Panc1 (cell line): ENCODE measurements at regions of chr15 and their contacts with region 1.

Region 1: GRCh38 chr15:31228985-31229826 is 97.4 kb upstream of the KLF13 start:
- DNase-seq: no peak
- ATAC-seq: peak; percentile 63; the same call in 1 of the 2 replicates
- H3K4me3 ChIP-seq: no peak overlapping the region
- H3K27ac ChIP-seq: no peak overlapping the region
- H3K4me1 ChIP-seq: peaks cover 2% of the 10 kb centered on the region
- H3K27me3 ChIP-seq: no peaks in the 10 kb centered on the region
- CTCF ChIP-seq: no peak

Region 2: DNA sequence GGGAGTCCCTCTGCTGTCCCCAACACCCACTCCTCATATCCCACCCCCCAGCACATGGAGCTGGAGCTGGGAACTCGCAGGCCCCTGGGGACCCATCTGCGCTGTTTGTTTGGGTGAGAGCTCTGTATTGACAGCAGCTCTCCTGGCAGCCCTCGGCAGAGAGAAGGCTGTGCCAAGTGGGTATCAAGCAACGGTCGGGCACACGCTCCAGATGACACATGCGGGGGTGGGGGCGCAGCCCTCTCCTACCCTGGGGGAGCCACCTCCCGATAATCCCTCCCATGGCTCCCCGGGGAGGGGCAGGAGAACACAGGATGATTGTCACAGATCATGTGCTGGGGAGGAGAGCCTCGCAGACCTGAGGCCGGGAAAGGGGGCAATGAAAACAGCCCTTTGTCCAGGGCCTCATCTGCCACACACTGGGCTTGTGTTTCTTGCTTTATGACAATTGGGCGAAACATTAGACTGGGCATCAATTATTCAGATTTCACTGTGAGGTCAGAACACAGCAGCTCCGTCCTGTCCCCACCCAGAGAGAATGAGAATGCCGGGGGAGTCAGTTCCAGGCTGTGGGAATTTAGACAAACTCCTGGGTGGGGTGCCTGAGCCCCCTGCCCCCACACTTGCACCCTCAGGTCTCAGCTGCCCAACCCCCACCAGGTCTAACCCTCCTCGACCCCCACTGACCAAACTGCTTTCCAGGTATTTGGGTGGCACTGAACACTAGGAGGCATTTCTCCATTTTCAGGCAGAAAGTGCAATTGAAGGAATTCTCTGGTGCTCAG is 51.0 kb after region 1 on chr15:
- CTCF ChIA-PET with region 1: no interaction called
- POLR2A ChIA-PET with region 1: no interaction called
- in situ Hi-C with region 1: no loop called
- intact Hi-C with region 1: loop called (anchors 10 kb)
- DNase-seq: no peak
- ATAC-seq: peak; percentile 61
- H3K4me3 ChIP-seq: no peak overlapping the region
- H3K27ac ChIP-seq: peak overlapping the region; percentile 66
- H3K4me1 ChIP-seq: peaks cover 13% of the 10 kb centered on the region
- H3K27me3 ChIP-seq: no peaks in the 10 kb centered on the region
- CTCF ChIP-seq: no peak

Region 3: DNA sequence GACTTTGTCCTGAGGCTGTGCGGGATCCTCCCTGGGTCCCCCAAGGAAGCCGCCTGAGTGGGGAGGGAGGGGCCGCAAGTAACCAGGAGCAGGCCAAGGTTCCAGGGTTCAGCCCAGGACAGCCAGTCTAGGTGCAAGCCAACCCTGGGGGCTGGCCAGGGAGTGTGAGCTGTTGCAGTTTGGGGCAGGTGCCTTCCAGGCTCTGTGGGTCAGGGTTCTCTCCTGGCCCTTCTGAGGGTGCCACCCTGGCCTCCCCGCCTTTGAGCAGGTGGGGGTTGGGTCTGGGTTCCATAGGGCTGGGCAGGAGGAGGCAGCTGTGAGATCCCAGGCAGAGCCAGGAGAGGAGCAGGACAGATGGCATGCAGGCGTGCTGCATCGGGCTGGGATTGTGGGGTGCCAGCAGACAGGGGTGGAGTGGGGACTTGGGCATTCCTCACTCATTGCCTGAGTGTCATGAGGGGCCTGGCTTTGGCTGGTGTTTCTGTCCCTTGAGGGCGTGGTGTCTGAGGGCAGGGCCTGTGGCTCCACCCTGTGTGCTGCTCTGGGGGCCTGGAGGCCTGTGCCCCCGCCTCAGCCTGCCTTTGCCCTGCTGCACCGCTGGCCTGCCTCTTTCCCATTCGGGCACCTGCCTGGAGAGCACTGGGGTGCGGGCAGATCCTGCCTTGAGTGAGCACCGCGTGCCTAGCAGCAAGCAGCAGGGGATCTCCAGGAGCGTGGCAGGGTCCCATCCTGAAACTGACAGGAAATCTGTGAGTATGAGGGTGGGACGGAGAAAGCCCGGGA is 115.8 kb after region 1 on chr15:
- CTCF ChIA-PET with region 1: no interaction called
- POLR2A ChIA-PET with region 1: no interaction called
- in situ Hi-C with region 1: no loop called
- intact Hi-C with region 1: no loop called
- DNase-seq: no peak
- ATAC-seq: no peak
- H3K4me3 ChIP-seq: no peak overlapping the region
- H3K27ac ChIP-seq: no peak overlapping the region
- H3K4me1 ChIP-seq: no peaks in the 10 kb centered on the region; the same call in 1 of the 2 replicates
- H3K27me3 ChIP-seq: no peaks in the 10 kb centered on the region
- CTCF ChIP-seq: no peak